Astrocyte of the cerebellum (primary cell): ENCODE measurements at regions of chr17 and their contacts with region 1.

Region 1: DNA sequence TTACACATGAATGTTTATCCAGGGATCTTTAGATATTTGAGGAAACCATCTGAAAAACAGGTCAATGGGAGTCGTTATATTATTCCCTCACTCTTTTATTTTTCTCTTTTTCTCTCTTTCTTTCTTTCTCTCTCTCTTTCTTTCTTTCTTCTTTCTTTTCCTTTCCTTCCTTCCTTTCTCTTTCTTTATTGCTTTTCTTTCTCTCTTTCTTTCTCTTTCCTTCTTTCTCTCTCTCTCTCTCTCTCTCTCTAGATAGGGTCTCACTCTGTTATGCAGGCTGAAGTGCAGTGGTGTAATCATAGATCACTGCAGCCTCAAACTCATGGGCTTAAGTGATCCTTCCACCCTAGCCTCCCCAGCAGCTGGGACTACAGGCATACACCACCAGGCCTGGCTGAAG is 20.3 kb upstream of the OR4D1 start:
- DNase-seq: no peak
- H3K4me3 ChIP-seq: no peak overlapping the region
- CTCF ChIP-seq: no peak

Region 2: DNA sequence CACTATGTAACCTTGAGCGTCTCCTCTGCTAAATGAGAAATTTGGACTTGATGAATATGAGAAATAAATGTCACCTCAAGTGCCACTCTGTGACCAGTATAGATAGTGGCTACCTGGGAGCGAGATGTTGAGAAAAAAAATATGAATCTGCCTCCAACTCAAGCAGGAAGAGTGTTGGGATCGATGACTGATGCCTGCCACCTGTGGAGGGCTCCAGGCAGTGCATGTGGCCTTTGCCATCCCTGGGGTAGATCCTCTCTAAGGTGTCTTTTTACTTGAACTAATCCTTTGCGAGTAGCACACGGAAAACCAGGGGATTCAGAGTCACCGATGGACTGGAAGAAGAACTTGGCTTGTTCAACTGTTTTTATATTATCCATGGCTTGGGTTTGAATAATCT is 392.2 kb before region 1 on chr17:
- in situ Hi-C with region 1: no loop called
- DNase-seq: no peak
- H3K4me3 ChIP-seq: no peak overlapping the region
- CTCF ChIP-seq: no peak

Region 3: GRCh38 chr17:58059141-58059540 is 68.7 kb before region 1 on chr17:
- in situ Hi-C with region 1: loop called (anchors 5 kb)
- DNase-seq: no peak
- H3K4me3 ChIP-seq: no peak overlapping the region
- CTCF ChIP-seq: no peak